Left cardiac atrium (tissue), 4 donors: ENCODE measurements at regions of chr9 and their contacts with region 1.

Region 1: DNA sequence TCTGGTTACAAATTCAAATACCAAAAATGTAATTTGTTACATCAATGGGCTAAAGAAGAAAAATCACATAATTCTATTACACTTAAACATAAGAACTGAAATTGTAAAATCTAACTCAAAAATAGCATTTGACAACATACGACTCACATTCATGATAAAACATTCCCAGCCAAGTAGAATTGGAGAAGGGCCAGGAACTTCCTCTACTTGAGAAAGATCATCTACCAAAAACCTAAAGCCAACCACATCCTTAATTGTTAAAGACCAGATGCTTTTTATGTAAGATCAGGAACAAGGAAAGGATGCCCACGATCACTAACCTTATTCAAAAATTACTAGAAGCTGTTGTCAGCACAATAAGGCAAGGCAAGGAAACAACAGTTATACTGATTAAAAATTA is 1819.8 kb upstream of the C9orf72 start:
- DNase-seq: no peak
- ATAC-seq: no peak

Region 2: GRCh38 chr9:29322240-29322639 is 70.8 kb before region 1 on chr9:
- intact Hi-C with region 1: loop called in 1 of 2 experiments (anchors 10 kb)
- DNase-seq: no peak
- ATAC-seq: no peak

Region 3: GRCh38 chr9:29456940-29457339 is 63.9 kb after region 1 on chr9:
- intact Hi-C with region 1: no loop called
- DNase-seq: no peak
- ATAC-seq: no peak